Posterior cingulate gyrus (tissue), 11 donors: ENCODE measurements at regions of chr13 and their contacts with region 1.

Region 1: DNA sequence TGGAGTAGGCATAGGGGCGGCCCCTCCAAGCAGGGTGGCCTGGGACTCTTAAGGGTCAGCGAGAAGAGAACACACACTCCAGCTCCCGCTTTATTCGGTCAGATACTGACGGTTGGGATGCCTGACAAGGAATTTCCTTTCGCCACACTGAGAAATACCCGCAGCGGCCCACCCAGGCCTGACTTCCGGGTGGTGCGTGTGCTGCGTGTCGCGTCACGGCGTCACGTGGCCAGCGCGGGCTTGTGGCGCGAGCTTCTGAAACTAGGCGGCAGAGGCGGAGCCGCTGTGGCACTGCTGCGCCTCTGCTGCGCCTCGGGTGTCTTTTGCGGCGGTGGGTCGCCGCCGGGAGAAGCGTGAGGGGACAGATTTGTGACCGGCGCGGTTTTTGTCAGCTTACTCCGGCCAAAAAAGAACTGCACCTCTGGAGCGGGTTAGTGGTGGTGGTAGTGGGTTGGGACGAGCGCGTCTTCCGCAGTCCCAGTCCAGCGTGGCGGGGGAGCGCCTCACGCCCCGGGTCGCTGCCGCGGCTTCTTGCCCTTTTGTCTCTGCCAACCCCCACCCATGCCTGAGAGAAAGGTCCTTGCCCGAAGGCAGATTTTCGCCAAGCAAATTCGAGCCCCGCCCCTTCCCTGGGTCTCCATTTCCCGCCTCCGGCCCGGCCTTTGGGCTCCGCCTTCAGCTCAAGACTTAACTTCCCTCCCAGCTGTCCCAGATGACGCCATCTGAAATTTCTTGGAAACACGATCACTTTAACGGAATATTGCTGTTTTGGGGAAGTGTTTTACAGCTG is at the starts of genes BRCA2 and ZAR1L:
- DNase-seq: peak; percentile 81 to 98 (median 90)

Region 2: GRCh38 chr13:32010136-32010535 is 305.3 kb before region 1 on chr13:
- intact Hi-C with region 1: no loop called
- DNase-seq: no peak

Region 3: DNA sequence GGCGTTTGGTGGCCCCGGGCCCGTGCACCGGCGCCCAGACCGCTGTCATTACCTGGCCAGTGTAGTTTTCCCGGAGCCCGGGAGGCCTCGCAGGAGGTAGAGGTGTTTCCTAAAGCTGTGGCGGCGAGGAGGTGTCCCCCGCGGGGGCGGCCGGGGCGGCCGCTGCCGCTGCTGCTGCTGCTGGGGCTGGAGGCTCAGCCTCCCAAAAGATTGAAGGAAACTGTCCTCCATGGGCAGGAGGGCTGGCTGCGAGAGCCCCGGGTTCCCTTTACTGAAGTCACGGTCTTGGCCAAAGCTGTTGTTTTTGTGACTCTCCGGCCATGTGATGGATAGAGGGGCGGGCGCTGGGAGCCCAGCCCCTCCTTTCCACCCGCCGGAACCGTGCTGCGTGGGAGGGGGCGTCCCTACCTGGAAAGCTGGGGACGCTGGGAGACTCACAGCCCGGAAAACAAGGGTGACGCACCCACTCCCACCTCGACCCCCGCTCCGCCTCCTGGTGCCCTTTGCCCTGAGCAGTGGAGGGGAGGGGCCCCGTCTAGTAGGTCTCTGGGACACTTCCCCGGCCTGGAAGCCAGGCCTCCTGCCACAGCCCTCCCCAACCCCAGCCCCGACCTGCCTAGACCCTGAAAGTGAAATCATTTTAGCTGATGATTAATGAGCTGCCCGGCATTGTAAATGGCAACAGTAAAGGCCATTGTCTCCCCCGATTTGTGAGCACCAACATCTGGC is 112.6 kb after region 1 on chr13 and contains the start of gene N4BP2L1:
- intact Hi-C with region 1: loop called (anchors 10 kb)
- DNase-seq: peak; percentile 52 to 95 (median 76)

Region 4: GRCh38 chr13:32538621-32539246 is 223.3 kb after region 1 on chr13 and contains the start of gene N4BP2L2:
- intact Hi-C with region 1: loop called (anchors 10 kb)
- DNase-seq: peak; percentile 91 to 99 (median 94)